ENCODE measurements at regions of chr7 and their contacts with region 1.

Region 1: GRCh38 chr7:37408291-37409228 is 40.1 kb downstream of the ELMO1 start:
- DNase-seq: no peak

Region 2: GRCh38 chr7:37311355-37311754 is 97.2 kb before region 1 on chr7:
- intact Hi-C with region 1: loop called in 1 of 2 experiments (anchors 10 kb)
- DNase-seq: peak; percentile 82

Region 3: GRCh38 chr7:37441816-37442215 is 33.3 kb after region 1 on chr7:
- intact Hi-C with region 1: loop called in 1 of 2 experiments (anchors 2 kb)
- DNase-seq: no peak